Right ventricle myocardium inferior (tissue), 1 donor: ENCODE measurements at regions of chr16 and their contacts with region 1.

Region 1: DNA sequence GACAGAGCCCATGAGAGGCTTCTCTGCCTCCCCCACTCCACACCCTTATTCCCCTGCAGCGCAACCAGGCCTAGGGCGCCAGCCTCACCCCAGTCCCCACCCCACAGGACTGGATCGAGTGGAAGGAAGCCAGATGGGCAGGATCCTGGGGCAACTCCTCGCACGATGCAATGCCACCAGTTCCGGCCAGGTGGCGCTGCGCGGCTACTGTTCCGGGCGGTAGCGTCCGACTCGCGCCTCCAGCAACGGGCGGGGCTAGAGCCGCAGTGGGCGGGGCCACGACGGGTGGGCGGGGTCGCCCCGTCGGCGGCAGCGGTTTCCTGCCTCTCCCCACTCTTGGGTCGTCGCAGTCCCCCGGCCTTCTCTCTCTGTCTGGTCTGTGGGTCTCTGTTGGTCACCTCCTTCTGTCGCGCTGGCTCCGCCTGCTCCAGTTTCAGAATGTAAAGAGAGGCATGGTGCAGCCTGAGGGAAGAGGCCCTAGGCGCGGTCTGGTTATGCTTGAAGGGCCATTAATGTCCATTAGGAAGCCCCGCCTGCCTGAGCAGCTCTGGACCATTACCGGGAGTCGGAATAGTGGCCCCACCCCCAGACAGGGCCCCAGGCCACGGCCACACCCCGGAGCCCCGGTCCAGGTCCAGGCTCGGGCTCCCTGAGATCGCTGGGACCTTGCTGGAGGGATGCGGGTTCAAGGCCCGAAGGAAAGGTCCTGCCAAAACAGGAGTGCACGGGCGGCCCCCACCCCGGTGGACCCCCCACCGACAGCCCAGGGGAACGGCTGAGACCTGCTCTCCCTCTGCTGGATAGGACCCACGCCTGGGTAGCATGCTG is 3.4 kb upstream of the NHERF2 start:
- DNase-seq: peak; percentile 98
- ATAC-seq: peak; percentile 91

Region 2: GRCh38 chr16:2056681-2057407 is 33.5 kb after region 1 on chr16:
- intact Hi-C with region 1: loop called (anchors 1 kb)
- DNase-seq: no peak
- ATAC-seq: no peak

Region 3: GRCh38 chr16:2142942-2143877 is 119.9 kb after region 1 on chr16:
- intact Hi-C with region 1: loop called (anchors 1 kb)
- DNase-seq: peak; percentile 60
- ATAC-seq: no peak

Region 4: DNA sequence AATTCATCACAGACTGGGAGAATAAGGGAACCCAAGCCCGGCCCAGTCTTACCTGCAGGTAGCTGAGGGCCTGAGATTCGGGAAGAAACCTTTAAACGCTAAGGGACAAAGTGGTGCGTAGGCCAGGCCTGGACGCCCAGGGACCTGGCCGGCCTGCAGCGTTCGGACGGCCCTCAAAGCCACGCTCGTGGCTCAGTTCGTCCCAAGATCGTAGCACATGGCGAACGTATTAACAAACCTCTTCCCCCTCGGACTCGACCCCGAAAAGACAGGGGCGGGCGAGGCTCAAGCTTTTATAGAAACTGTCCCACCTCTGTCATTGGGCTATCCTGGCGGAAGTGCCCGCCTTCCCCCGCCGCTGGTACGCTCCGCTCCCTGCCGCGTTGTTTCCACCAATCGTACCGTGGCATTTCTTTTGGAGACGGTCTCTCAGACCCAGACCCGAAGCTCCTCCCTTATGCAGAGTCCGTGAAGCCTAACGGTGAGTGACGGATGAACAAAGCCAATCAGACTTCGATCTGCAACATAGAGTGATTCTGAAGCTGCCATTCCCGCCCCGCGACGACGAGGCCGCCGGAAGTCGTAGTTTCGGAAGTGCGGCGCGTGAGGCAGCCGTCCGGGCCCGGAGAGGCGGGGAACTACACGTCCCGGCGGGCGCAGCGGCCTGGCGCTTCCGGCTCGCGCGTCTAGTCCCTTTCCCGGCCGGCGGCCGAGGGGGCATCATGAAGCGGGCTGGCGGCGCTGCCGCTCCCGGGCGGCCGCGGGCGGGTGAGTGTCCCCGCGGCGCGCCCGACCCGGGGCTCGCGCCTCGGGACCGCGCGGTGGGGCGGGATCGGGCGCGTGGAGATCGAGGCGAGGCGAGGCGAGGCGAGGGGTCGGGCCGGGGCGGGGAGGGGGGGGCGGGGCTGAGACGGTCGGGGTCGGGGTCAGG is 132.0 kb after region 1 on chr16 and contains the start of gene TRAF7:
- intact Hi-C with region 1: no loop called
- DNase-seq: peak; percentile 99
- ATAC-seq: peak; percentile 95
- total RNA-seq, gene TRAF7: 27.3 TPM